HCT116 (cell line): ENCODE measurements at regions of chr17 and their contacts with region 1.

Region 1: DNA sequence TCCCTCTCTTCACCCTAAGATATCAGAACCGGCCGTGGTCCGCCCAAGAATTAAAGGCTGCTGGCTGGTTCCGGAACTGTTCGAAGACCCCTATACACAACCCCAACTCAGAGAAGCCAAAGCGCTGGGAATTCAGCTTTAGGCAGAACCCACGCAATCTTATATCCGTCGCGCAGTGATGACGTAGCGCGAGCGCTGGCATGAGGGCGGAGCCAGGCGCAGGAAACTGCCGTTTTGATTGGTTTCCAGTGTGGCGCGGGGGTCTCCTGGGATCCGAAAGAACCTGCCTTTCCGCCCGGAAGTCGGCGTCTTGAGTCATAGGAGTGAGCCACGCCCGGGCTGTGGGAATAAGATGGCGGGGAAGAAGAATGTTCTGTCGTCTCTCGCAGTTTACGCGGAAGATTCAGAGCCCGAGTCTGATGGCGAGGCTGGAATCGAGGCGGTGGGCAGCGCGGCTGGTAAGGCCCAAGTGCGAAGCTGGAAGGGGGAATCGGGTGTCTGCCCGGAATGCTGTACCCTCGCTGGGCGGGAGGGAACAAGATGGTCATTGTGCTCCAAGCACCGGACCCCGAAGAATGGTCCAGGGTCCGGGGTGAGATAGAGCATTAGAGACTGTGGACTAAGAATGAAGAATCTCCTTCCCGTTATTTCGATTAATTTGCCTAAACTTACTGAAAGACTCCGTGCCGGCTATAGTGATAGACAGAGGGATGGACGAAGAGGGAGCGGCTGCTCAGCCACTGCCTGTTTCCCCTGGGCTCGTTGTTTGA is at the starts of genes RECQL5 and SAP30BP:
- DNase-seq: peak; percentile 99
- ATAC-seq: peak; percentile 100
- H3K4me3 ChIP-seq: peak within 1 kb of the TSS; percentile 79 to 83
- H3K27ac ChIP-seq: peak within 1 kb of the TSS; percentile 74
- H3K4me1 ChIP-seq: peaks cover 13 to 19% of the 10 kb centered on the region in 2 experiments; a peak in 3 of 4 replicates
- H3K27me3 ChIP-seq: no peaks in the 10 kb centered on the region
- CTCF ChIP-seq: no peak
- POLR2A ChIP-seq: peak; percentile 69
- RAD21 ChIP-seq: no peak
- total RNA-seq, gene RECQL5: 83.3 TPM
- total RNA-seq, gene SAP30BP: 149 TPM

Region 2: DNA sequence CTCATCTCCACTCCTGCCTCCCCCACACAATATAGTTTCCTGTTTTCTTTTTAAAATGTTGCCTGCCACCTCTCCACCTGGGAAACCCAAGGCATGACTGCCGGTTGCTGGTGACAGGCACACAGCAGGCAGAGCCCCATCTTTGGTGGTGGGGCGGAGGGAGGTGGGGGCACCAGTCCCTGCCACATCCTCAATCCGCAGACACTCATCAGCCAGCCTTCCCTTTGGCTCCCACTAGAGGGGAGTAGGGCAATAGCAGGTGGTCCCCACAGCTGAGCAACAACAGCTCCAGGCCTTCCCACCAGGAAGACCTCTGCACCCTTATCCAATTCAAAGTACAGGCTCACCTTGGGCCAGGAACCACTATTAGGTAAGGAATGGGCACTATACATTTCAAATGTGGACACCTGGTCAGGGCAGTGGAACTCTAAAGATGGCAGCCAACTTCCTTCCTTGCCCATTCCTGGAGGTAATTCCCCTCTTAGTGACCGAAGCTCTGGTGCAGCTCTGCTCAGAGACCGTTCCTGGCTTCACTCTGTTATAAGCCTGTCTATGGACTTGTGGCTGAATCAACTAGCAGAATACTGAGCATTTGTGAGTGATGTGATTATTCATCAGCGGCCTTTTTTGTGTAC is 14.2 kb before region 1 on chr17:
- CTCF ChIA-PET with region 1: interaction called, 10 read pairs
- POLR2A ChIA-PET with region 1: interaction called, 5 read pairs
- RAD21 ChIA-PET with region 1: no interaction called
- intact Hi-C with region 1: no loop called
- DNase-seq: no peak
- ATAC-seq: peak; percentile 95
- H3K4me3 ChIP-seq: no peak overlapping the region
- H3K27ac ChIP-seq: no peak overlapping the region
- H3K4me1 ChIP-seq: no peaks in the 10 kb centered on the region
- H3K27me3 ChIP-seq: no peaks in the 10 kb centered on the region
- CTCF ChIP-seq: peak; percentile 87 to 98 (median 95)
- POLR2A ChIP-seq: no peak
- RAD21 ChIP-seq: peak; percentile 82